Activated CD4-positive, alpha-beta memory T cell treated with anti-CD3 and anti-CD28 coated beads, Interleukin-2, amount 10 ng/mL, durations not matched to agents 7 days and 5 days (primary cell): ENCODE measurements at regions of chr5 and their contacts with region 1.

Region 1: DNA sequence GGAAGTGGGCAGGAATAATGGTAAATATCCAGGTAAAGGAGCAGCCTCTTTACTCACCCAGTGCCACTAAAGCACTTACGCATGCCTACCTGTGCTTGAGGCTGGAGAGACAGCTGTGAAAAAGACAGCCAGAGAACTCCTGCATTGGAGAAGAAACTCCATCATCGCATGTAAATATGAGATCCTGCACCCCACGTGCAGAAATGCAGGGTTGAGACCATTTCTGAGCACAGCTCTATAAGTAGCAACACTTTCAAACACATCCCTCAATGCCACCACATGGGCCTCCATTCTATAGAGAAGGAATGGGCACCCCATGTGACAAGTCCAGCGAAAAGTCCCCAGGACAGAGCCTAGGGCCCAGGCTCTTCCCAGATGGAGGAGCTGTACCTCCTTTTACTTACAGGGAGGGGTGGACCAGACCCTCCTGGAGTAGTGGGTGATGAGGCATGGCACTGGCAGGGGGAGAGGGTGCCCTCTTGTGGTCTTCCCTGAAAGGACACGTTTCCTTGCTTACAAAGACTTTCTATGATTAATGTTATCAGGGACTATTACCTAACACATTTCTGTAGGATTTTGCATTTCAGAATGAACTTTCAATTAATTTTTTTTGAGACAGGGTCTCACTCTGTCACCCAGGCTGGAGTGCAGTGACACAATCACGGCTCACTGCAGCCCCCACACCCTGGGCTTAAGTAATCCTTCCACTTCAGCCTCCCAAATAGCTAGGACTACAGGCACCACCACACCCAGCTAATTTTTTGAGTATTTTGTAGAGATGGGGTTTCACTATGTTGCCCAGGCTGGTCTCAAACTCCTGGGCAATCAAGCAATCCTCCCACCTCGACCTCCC is 55.3 kb upstream of the IL17B start:
- DNase-seq: peak; percentile 57
- H3K4me3 Mint-ChIP-seq: no peak overlapping the region
- H3K27ac Mint-ChIP-seq: no peak overlapping the region
- H3K4me1 Mint-ChIP-seq: peaks cover 45% of the 10 kb centered on the region
- H3K27me3 Mint-ChIP-seq: peaks cover 5% of the 10 kb centered on the region

Region 2: DNA sequence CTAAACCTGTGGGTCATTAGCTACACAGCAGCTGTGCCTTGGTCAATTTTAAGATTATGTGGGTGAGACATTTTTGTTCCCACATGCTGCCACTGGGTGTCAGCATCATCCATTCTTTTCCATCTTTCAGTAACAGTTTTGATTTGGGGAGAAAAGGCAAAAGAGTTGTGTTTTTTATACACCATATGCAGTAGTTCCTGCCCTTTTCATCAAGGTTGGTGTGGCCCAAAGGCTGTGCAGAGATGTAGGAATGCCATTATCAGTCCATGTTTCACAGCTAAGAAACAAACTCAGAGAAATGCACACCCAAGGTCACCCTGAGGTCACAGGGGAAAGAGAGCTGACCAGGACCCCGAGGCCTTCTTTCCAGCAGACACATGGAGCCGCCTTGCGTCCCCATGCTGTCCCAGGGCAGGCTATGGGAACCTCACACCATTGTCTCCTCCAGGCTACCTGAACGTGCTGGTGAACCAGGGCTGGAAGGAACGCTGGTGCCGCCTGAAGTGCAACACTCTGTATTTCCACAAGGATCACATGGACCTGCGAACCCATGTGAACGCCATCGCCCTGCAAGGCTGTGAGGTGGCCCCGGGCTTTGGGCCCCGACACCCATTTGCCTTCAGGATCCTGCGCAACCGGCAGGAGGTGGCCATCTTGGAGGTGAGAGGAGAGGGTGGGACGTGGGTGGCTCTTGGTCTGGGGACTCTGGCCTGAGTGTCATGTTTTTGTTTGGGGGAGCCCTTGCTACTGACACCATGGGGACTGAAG is 116.9 kb before region 1 on chr5:
- CTCF ChIA-PET with region 1: interaction called, 11 read pairs
- POLR2A ChIA-PET with region 1: no interaction called
- DNase-seq: peak; percentile 45
- H3K4me3 Mint-ChIP-seq: no peak overlapping the region
- H3K27ac Mint-ChIP-seq: no peak overlapping the region
- H3K4me1 Mint-ChIP-seq: peaks cover 2% of the 10 kb centered on the region
- H3K27me3 Mint-ChIP-seq: no peaks in the 10 kb centered on the region

Region 3: DNA sequence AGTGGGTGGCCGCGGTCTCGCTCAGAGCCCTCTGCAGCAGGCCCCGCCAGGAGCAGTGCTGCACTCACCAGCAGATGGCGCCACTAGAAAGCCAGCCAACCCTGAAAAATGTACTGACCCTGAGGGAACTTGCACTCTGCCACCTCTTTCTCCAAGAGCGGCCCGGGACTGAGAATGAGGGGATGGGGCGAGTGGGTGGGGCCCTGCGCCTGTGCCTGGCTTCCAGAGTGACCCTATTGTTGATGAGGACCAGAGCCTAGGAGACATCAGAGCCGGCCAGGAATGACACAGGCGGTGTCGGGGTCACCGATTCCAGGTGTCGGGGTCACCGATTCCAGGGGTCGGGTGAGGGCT is 52.4 kb before region 1 on chr5:
- CTCF ChIA-PET with region 1: interaction called, 39 read pairs
- POLR2A ChIA-PET with region 1: no interaction called
- DNase-seq: peak; percentile 75
- H3K4me3 Mint-ChIP-seq: no peak overlapping the region
- H3K27ac Mint-ChIP-seq: no peak overlapping the region
- H3K4me1 Mint-ChIP-seq: no peaks in the 10 kb centered on the region
- H3K27me3 Mint-ChIP-seq: peaks cover 1% of the 10 kb centered on the region

Region 4: GRCh38 chr5:149414405-149415060 is 19.9 kb before region 1 on chr5:
- CTCF ChIA-PET with region 1: interaction called, 10 read pairs
- POLR2A ChIA-PET with region 1: no interaction called
- DNase-seq: no peak
- H3K4me3 Mint-ChIP-seq: no peak overlapping the region
- H3K27ac Mint-ChIP-seq: no peak overlapping the region
- H3K4me1 Mint-ChIP-seq: no peaks in the 10 kb centered on the region
- H3K27me3 Mint-ChIP-seq: peaks cover 9% of the 10 kb centered on the region

Region 5: GRCh38 chr5:149500922-149501582 is 66.7 kb after region 1 on chr5:
- CTCF ChIA-PET with region 1: no interaction called
- POLR2A ChIA-PET with region 1: no interaction called
- DNase-seq: no peak
- H3K4me3 Mint-ChIP-seq: no peak overlapping the region
- H3K27ac Mint-ChIP-seq: no peak overlapping the region
- H3K4me1 Mint-ChIP-seq: no peaks in the 10 kb centered on the region
- H3K27me3 Mint-ChIP-seq: no peaks in the 10 kb centered on the region

Region 6: GRCh38 chr5:149636851-149637246 is 202.5 kb after region 1 on chr5:
- CTCF ChIA-PET with region 1: no interaction called
- POLR2A ChIA-PET with region 1: no interaction called
- DNase-seq: peak; percentile 59
- H3K4me3 Mint-ChIP-seq: no peak overlapping the region
- H3K27ac Mint-ChIP-seq: no peak overlapping the region
- H3K4me1 Mint-ChIP-seq: peaks cover 16% of the 10 kb centered on the region
- H3K27me3 Mint-ChIP-seq: no peaks in the 10 kb centered on the region